ENCODE measurements at regions of chr14 and their contacts with region 1.

Region 1: DNA sequence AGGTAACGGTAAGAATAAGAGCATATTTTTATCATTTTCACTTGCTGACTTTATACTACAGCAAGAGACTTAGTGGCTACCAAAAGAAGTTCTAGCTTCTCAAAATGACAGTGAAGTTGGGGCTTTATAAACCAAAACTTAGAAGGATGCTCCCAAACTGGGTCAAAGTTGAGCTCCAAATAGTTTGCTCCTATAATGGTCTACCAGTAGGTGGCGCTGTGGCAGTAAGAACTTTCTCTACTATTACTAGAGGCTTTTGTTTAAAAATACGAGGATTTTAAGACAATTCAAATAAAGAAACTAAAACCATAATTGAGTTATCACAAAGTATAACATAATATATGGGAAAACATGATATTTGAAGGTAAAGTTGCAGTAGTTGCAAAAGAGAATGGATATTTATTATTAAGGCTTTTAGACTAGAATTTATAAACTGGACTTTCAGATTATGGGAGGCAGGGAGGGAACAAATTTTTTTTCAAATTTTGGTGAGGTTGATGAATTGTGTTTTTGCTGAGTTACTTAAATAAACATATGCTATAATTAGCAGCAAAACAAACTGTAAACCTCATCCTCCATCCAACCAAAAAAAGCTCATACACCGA is 75.0 kb downstream of the TGFB3 start:
- DNase-seq: peak; percentile 36
- H3K4me3 ChIP-seq: no peak overlapping the region
- H3K27ac ChIP-seq: no peak overlapping the region
- H3K27me3 ChIP-seq: no peaks in the 10 kb centered on the region
- CTCF ChIP-seq: peak; percentile 88

Region 2: DNA sequence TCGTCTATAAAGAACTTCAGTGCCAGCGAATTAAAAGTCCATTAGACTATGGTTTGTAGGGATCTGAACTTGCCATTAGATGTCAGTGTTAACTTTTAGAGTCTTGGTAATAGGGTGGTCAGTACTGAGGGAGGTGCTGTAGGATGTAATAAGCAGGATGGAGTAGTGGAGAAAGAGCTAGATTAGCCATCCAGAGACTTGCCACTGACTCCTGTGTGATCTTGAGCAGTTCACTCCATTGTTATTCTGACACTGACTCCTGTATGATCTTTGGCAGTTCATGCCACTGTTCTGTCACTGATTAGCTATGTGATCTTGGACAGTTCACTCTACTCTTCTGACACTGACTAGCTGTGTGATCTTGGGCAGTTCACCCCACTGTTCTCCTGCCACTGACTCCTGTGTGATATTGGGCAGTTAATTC is 112.2 kb before region 1 on chr14:
- CTCF ChIA-PET with region 1: interaction called, 41 read pairs
- POLR2A ChIA-PET with region 1: no interaction called
- DNase-seq: peak; percentile 33
- H3K4me3 ChIP-seq: no peak overlapping the region
- H3K27ac ChIP-seq: no peak overlapping the region
- H3K27me3 ChIP-seq: no peaks in the 10 kb centered on the region
- CTCF ChIP-seq: peak; percentile 68

Region 3: DNA sequence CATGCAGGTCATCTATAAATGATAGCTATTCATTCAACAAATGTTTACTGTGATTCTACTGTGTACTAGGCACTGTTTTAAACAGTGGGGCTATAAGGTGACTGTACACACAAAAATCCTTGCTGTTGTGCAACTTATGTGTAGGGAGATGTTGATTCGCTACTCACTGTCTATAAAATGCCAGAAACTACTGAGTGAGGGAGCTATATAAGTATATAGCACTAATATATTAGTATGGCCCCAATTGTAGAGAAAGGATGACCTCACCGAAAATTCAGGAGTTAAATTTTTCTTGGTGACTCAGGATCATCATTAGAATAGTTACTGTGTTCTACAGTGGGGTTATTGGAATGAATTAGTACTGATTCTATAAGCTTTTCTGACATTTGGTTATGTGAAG is 42.4 kb before region 1 on chr14:
- CTCF ChIA-PET with region 1: interaction called, 26 read pairs
- POLR2A ChIA-PET with region 1: no interaction called
- DNase-seq: peak; percentile 55
- H3K4me3 ChIP-seq: no peak overlapping the region
- H3K27ac ChIP-seq: no peak overlapping the region
- H3K27me3 ChIP-seq: no peaks in the 10 kb centered on the region
- CTCF ChIP-seq: no peak

Region 4: DNA sequence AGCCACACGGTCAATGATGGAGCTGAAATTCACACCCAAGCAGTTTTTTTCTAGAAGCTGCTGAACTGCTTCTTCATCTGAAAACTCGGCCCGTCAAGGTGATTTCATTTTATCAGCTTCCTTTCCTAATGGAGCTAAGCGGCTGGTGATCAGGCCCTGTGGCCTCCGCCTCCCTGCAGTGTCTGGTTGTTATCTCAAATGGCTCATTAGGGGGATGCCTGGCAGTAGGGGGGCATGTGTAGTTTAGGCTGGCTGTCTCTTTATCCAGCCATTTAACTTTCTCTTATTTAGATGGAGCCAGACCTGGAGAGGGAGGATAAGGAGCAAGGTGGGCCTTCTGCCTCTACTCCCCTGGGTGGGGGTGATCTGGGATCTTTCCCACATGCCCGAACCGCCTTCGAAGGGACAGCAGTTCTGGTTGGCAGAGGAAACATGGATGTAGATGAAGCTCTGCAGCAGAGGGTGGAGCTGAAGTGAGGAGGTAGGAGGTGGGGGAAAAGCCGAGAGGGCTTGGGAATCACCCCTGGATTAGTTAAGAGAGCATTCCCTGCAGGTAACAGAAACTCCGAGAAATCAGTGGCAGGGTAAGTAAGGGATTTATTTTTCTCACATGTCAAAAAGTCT is 10.7 kb after region 1 on chr14:
- CTCF ChIA-PET with region 1: interaction called, 46 read pairs
- POLR2A ChIA-PET with region 1: no interaction called
- DNase-seq: no peak
- H3K4me3 ChIP-seq: no peak overlapping the region
- H3K27ac ChIP-seq: no peak overlapping the region
- H3K27me3 ChIP-seq: no peaks in the 10 kb centered on the region
- CTCF ChIP-seq: no peak

Region 5: DNA sequence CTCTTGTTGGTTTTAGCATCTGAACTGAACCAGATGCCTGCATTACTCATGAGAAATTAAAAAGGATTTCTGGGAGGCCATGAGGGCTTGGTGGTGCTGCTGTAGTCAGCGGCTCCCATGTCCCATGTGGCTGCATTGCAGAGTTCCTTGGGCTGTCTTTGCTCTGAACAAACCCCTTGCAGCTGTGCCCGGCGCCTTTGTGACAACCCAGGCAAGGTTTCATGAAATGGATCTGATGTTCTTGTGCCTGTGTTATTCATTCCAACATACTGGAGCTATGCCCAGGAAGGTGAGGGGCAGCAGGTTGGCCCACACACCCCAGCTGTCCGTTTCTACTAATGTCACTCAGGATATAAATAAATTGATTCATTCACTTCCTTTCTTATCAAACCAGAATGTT is 34.3 kb after region 1 on chr14:
- CTCF ChIA-PET with region 1: interaction called, 35 read pairs
- POLR2A ChIA-PET with region 1: no interaction called
- DNase-seq: no peak
- H3K4me3 ChIP-seq: no peak overlapping the region
- H3K27ac ChIP-seq: no peak overlapping the region
- H3K27me3 ChIP-seq: no peaks in the 10 kb centered on the region
- CTCF ChIP-seq: no peak

Region 6: GRCh38 chr14:75995372-75996041 is 88.7 kb after region 1 on chr14:
- CTCF ChIA-PET with region 1: interaction called, 11 read pairs
- POLR2A ChIA-PET with region 1: no interaction called
- DNase-seq: peak; percentile 80
- H3K4me3 ChIP-seq: peak overlapping the region; percentile 34
- H3K27ac ChIP-seq: peak overlapping the region; percentile 92
- H3K27me3 ChIP-seq: no peaks in the 10 kb centered on the region
- CTCF ChIP-seq: no peak

Region 7: GRCh38 chr14:76293923-76294322 is 387.1 kb after region 1 on chr14:
- CTCF ChIA-PET with region 1: no interaction called
- POLR2A ChIA-PET with region 1: no interaction called
- DNase-seq: no peak
- H3K4me3 ChIP-seq: no peak overlapping the region
- H3K27ac ChIP-seq: no peak overlapping the region
- H3K27me3 ChIP-seq: peaks cover 11% of the 10 kb centered on the region
- CTCF ChIP-seq: no peak